ENCODE measurements at regions of chr3 and their contacts with region 1.

Region 1: GRCh38 chr3:151379083-151379734 is 5.3 kb downstream of the P2RY12 start:
- DNase-seq: peak; percentile 6
- ATAC-seq: peak; percentile 95
- H3K4me3 ChIP-seq: no peak overlapping the region
- H3K27ac ChIP-seq: no peak overlapping the region
- H3K4me1 ChIP-seq: no peaks in the 10 kb centered on the region
- H3K27me3 ChIP-seq: no peaks in the 10 kb centered on the region
- CTCF ChIP-seq: peak; percentile 57
- EP300 ChIP-seq: no peak
- POLR2A ChIP-seq: no peak
- RAD21 ChIP-seq: no peak

Region 2: GRCh38 chr3:151067158-151067557 is 312.1 kb before region 1 on chr3:
- CTCF ChIA-PET with region 1: no interaction called
- POLR2A ChIA-PET with region 1: no interaction called
- in situ Hi-C with region 1: no loop called
- intact Hi-C with region 1: no loop called
- DNase-seq: peak; percentile 42
- ATAC-seq: peak; percentile 87
- H3K4me3 ChIP-seq: no peak overlapping the region
- H3K27ac ChIP-seq: no peak overlapping the region
- H3K4me1 ChIP-seq: no peaks in the 10 kb centered on the region
- H3K27me3 ChIP-seq: no peaks in the 10 kb centered on the region
- CTCF ChIP-seq: peak; percentile 72
- EP300 ChIP-seq: no peak
- POLR2A ChIP-seq: no peak
- RAD21 ChIP-seq: no peak

Region 3: GRCh38 chr3:151918253-151919029 is 539.2 kb after region 1 on chr3:
- CTCF ChIA-PET with region 1: no interaction called
- POLR2A ChIA-PET with region 1: no interaction called
- in situ Hi-C with region 1: no loop called
- intact Hi-C with region 1: loop called (anchors 1 kb)
- DNase-seq: peak; percentile 34
- ATAC-seq: peak; percentile 54; the same call in 2 of the 3 replicates
- H3K4me3 ChIP-seq: no peak overlapping the region
- H3K27ac ChIP-seq: no peak overlapping the region
- H3K4me1 ChIP-seq: no peaks in the 10 kb centered on the region
- H3K27me3 ChIP-seq: no peaks in the 10 kb centered on the region
- CTCF ChIP-seq: peak; percentile 60
- EP300 ChIP-seq: no peak
- POLR2A ChIP-seq: no peak
- RAD21 ChIP-seq: no peak

Measured in HepG2 (cell line).